Activated B cell treated with CpG ODN at 0.5 μM for 24 hours (primary cell): ENCODE measurements at regions of chr1 and their contacts with region 1.

Region 1: DNA sequence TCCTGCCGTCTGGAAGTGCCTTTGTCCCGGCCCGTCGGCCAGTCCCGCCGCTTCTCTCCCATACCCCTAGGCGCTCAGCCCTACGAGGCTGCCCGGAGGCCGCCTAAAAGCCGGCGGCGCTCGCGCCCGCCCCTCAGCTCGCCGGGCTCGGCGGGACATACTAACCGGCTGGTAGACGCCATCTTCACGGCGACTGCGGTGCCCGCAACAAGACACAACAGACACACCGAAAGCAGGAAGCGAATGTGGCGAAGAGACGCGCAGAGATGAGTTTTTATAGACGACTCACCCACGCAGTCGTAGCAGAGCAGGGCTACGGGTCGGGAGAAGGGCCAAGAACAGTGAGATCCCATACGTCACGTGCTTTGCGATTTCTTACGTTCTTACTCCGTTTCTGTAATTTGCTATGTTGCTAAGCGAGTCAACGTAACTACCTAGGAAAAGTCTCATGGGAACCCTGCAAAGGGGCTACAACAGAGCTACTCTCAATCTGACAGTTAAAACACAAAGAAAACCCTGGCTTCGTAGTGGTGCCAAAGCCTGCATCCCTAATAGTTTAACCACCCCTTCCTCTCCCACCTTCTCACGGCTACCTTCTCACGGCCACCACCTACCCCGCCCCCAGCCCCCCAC is at the start of gene GTF2B:
- DNase-seq: peak; percentile 90
- ATAC-seq: peak; percentile 91
- H3K4me3 Mint-ChIP-seq: peak within 1 kb of the TSS; percentile 99
- H3K27ac Mint-ChIP-seq: peak within 1 kb of the TSS; percentile 96
- H3K4me1 Mint-ChIP-seq: peaks cover 40% of the 10 kb centered on the region
- H3K27me3 Mint-ChIP-seq: no peaks in the 10 kb centered on the region
- CTCF ChIP-seq: no peak
- total RNA-seq, gene GTF2B: 30.0 and 32.2 TPM in 2 replicates

Region 2: DNA sequence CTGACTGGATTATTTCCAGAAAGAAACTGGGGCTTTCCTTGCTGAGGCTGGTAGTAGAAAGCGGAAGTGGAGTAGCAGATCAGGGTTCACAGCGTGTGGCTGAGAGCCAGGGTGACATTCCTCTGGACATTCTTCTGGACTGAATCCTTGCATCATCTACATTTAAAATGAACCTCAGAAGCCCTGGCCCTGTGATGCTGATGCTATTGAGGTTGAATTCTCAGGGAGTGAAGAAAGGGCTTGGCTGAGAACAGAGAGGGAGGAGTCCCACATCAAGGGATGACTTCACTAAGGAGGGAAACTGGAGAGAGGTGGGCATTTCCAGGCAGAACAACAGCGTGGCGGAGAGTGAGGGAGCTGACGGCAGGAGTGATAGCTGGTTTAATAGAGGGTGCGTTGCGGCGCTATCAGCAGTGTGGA is 1665.1 kb before region 1 on chr1:
- CTCF ChIA-PET with region 1: no interaction called
- POLR2A ChIA-PET with region 1: interaction called, 12 read pairs
- intact Hi-C with region 1: no loop called
- DNase-seq: no peak
- ATAC-seq: no peak
- H3K4me3 Mint-ChIP-seq: no peak overlapping the region
- H3K27ac Mint-ChIP-seq: no peak overlapping the region
- H3K4me1 Mint-ChIP-seq: peaks cover 6% of the 10 kb centered on the region
- H3K27me3 Mint-ChIP-seq: no peaks in the 10 kb centered on the region
- CTCF ChIP-seq: no peak

Region 3: GRCh38 chr1:88990426-88990825 is 99.0 kb after region 1 on chr1:
- CTCF ChIA-PET with region 1: no interaction called
- POLR2A ChIA-PET with region 1: no interaction called
- intact Hi-C with region 1: loop called (anchors 1 kb)
- DNase-seq: no peak
- ATAC-seq: no peak
- H3K4me3 Mint-ChIP-seq: no peak overlapping the region
- H3K27ac Mint-ChIP-seq: no peak overlapping the region
- H3K4me1 Mint-ChIP-seq: peaks cover 39% of the 10 kb centered on the region
- H3K27me3 Mint-ChIP-seq: no peaks in the 10 kb centered on the region
- CTCF ChIP-seq: no peak

Region 4: DNA sequence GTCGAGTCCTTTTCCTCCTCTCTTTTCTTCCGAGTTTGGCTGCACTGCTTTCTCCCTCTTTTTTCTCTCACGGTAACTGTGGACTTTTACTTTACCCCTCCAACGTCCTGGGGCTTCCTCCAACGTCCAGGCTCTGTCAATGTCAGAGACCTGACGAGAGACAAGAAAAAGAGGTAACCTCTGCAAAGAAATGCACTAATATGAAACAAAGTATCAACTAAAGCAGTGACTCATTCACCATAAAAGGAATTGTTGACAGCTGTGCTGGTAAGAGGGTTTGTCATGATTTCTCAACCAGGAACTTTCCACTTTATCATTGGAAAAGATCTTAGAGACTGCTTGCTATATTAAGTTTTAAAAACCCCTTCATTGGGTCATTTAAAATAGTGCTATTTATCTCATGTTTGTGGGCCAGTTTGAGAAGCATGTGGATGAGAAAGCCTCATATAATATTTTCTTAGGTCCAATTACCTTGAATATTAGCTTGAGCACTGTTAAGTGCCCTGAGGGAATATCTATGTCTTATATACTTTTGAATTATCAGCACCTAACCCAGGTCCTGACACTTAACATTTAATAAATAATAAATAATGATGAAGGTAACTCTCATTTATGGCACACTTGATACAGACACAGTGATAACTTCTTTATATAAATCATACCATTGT is 234.6 kb after region 1 on chr1 and contains the start of gene GBP2:
- CTCF ChIA-PET with region 1: no interaction called
- POLR2A ChIA-PET with region 1: interaction called, 10 read pairs
- intact Hi-C with region 1: no loop called
- DNase-seq: no peak
- ATAC-seq: peak; percentile 79
- H3K4me3 Mint-ChIP-seq: peak within 1 kb of the TSS; percentile 90
- H3K27ac Mint-ChIP-seq: peak within 1 kb of the TSS; percentile 92
- H3K4me1 Mint-ChIP-seq: peaks cover 64% of the 10 kb centered on the region
- H3K27me3 Mint-ChIP-seq: no peaks in the 10 kb centered on the region
- CTCF ChIP-seq: no peak
- total RNA-seq, gene GBP2: 24.4 and 26.7 TPM in 2 replicates

Region 5: GRCh38 chr1:89198491-89199072 is 307.1 kb after region 1 on chr1 and contains the start of gene GBP4:
- CTCF ChIA-PET with region 1: no interaction called
- POLR2A ChIA-PET with region 1: no interaction called
- intact Hi-C with region 1: loop called (anchors 5 kb)
- DNase-seq: peak; percentile 27
- ATAC-seq: peak; percentile 47
- H3K4me3 Mint-ChIP-seq: peak within 1 kb of the TSS; percentile 96
- H3K27ac Mint-ChIP-seq: peak within 1 kb of the TSS; percentile 92
- H3K4me1 Mint-ChIP-seq: peaks cover 76% of the 10 kb centered on the region
- H3K27me3 Mint-ChIP-seq: no peaks in the 10 kb centered on the region
- CTCF ChIP-seq: no peak
- total RNA-seq, gene GBP4: 19.2 and 19.5 TPM in 2 replicates

Region 6: DNA sequence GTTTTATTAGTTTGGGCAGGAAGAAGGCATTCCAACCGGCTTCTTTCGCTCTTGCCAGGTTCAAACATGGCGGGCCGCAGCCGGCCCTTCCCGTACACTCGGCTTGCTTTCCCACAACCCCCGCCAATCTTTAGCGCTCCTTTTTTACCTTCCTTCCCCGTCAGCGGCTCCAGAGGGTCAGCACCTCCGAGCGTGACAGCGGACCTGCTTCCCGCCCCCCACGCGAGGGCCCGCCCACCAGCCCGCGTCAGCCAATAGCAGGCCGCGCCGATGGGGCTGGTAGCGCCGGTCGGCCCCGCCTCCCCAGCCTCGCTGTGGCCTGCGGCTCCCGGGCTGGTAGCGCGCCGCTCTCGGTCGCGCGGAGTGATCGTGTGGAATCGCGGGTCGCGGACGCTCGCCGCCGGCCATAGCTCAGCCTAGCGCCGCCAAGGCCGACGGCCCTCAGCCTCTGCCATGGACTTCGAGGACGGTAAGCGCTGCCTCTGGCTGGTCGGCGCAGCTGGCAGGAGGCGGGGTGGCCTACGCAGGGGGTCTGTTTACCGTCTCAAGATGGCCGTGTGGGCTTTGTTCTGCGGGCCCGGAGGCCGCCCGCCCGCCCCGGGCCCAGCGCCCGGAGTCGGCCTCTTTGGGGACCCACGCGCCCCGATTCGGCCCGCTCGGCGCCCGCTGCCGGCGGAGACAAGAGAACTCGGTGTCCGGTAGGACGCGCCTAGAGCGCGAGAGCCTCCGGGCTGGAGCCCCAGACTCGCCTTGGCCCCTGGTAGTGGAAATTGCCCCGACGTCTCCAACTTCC is 1103.6 kb after region 1 on chr1 and contains the start of gene ZNF326:
- CTCF ChIA-PET with region 1: no interaction called
- POLR2A ChIA-PET with region 1: no interaction called
- intact Hi-C with region 1: loop called (anchors 2 kb)
- DNase-seq: peak; percentile 98
- ATAC-seq: peak; percentile 97
- H3K4me3 Mint-ChIP-seq: peak within 1 kb of the TSS; percentile 94
- H3K27ac Mint-ChIP-seq: peak within 1 kb of the TSS; percentile 88
- H3K4me1 Mint-ChIP-seq: peaks cover 32% of the 10 kb centered on the region
- H3K27me3 Mint-ChIP-seq: no peaks in the 10 kb centered on the region
- CTCF ChIP-seq: no peak
- total RNA-seq, gene ZNF326: 26.2 and 30.3 TPM in 2 replicates